ENCODE measurements at regions of chr1 and their contacts with region 1.

Region 1: DNA sequence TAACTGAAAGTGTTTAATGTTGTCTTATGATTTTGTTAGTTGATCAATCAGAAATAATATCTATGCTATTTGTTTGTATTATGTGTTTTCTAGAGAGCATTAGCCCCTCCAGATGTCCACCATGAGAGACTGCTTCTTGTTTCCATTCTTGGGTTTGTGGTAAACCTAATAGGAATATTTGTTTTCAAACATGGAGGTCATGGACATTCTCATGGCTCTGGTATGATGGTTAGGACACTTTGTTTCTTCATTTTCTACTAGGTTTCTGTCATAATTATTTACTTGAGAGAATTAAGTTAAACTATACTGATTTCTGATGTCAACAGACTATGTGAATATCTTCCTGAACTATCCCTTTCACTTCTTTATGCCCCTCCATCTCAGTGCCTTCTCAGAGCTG is 16.1 kb downstream of the SLC30A7 start:
- DNase-seq: no peak
- H3K4me3 ChIP-seq: no peak overlapping the region
- H3K27ac ChIP-seq: no peak overlapping the region
- H3K4me1 ChIP-seq: no peaks in the 10 kb centered on the region
- CTCF ChIP-seq: no peak

Region 2: GRCh38 chr1:100895540-100896483 is 16.2 kb before region 1 on chr1 and contains the start of gene SLC30A7:
- CTCF ChIA-PET with region 1: no interaction called
- POLR2A ChIA-PET with region 1: interaction called, 18 read pairs
- intact Hi-C with region 1: no loop called
- DNase-seq: peak; percentile 88
- H3K4me3 ChIP-seq: peak within 1 kb of the TSS; percentile 99
- H3K27ac ChIP-seq: peak within 1 kb of the TSS; percentile 77
- H3K4me1 ChIP-seq: peaks cover 30% of the 10 kb centered on the region
- CTCF ChIP-seq: no peak
- total RNA-seq, gene SLC30A7: 5.5 and 8.6 TPM in 2 replicates

Region 3: GRCh38 chr1:101128211-101128727 is 216.2 kb after region 1 on chr1:
- CTCF ChIA-PET with region 1: no interaction called
- POLR2A ChIA-PET with region 1: no interaction called
- intact Hi-C with region 1: loop called (anchors 10 kb)
- DNase-seq: peak; percentile 85
- H3K4me3 ChIP-seq: peak overlapping the region; percentile 19
- H3K27ac ChIP-seq: peak overlapping the region; percentile 71
- H3K4me1 ChIP-seq: peaks cover 22% of the 10 kb centered on the region
- CTCF ChIP-seq: no peak

Region 4: DNA sequence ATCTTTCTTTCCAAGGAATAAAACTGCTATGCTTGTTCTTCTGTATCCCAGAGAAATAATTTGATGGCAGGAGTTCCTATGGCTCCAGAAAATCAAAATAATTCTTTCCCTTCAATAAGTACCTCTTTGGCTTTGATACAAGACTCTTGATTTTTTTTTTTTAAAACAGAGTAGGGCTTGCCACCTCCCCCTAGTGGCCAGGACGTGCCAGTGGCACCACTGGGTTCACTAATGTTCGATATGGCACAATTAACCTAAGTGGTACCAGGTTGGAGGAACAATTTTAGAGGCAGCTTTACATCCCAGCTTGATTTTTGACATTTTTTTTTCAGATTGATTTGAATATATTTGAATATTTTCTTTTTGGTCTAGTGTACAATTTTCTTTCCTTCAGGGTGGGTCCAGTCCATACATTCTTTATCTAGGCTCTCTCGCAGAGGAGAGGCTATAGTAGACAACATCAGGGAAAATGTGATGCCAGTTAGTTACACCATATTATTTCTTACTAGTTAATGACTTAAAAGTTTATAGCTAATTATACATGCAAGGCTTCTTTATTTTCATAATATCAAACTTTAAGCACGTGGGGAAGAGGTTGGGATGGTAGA is 655.7 kb after region 1 on chr1:
- CTCF ChIA-PET with region 1: no interaction called
- POLR2A ChIA-PET with region 1: no interaction called
- intact Hi-C with region 1: no loop called
- DNase-seq: peak; percentile 53
- H3K4me3 ChIP-seq: no peak overlapping the region
- H3K27ac ChIP-seq: no peak overlapping the region
- H3K4me1 ChIP-seq: no peaks in the 10 kb centered on the region
- CTCF ChIP-seq: peak; percentile 99